Activated CD8-positive, alpha-beta T cell treated with anti-CD3 and anti-CD28 coated beads for 36 hours (primary cell): ENCODE measurements at regions of chr3 and their contacts with region 1.

Region 1: DNA sequence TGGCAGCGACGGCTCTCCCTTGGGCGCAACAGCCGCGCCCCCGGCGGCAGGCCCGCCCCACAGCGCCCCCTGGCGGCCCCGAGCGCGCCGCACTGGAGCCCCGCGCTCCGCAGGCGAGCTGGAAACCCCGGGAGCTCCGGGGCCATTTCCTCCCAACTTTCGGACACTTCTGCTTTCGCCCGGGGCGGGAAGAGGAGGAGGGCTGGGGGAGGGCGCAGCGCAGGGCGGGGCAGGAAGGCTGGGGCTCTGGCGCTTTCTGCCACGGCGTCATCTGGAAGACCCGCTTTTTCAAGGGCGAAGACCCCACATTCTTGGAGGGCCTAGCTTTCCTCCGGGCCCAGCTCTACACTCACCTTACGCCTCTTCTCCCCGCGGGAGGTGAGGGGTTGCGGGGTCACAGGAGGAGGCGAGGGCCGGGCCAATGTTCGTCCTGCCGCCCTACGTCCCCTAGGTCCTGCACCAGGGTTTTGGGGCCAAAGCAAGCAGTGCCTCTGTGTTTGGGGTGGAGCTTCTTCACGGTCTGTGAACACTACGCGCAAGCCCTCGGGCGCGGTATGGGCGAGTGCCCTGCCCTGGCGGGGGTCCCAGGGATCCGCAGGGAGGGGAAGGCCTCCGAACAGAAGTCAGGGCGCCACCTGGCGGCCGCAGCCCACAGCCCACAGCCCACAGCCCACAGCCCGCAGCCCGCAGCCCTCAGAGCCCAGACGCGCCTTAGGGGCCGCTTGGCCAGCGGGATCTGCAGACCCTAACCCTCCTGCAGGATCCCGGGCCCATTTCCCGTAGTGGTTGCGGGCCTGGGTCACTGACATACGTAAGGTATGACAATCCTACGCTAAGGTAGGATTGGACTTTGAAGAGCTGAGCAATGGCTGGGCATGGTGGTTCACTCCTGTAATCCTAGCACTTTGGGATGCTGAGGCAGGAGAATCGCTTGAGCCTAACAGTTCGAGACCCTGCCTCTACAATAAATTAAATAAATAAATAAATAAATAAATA is 31.1 kb downstream of the FOXL2 start:
- DNase-seq: peak; percentile 91
- ATAC-seq: peak; percentile 93
- H3K4me3 Mint-ChIP-seq: peak overlapping the region; percentile 80
- H3K27ac Mint-ChIP-seq: peak overlapping the region; percentile 78
- H3K4me1 Mint-ChIP-seq: peaks cover 3% of the 10 kb centered on the region
- H3K27me3 Mint-ChIP-seq: peaks cover 4% of the 10 kb centered on the region
- CTCF ChIP-seq: peak; percentile 90

Region 2: GRCh38 chr3:138608322-138609135 is 307.3 kb before region 1 on chr3 and contains the start of gene FAIM:
- CTCF ChIA-PET with region 1: interaction called, 11 read pairs
- POLR2A ChIA-PET with region 1: interaction called, 3 read pairs
- intact Hi-C with region 1: no loop called
- DNase-seq: peak; percentile 74
- ATAC-seq: peak; percentile 76
- H3K4me3 Mint-ChIP-seq: peak within 1 kb of the TSS; percentile 76
- H3K27ac Mint-ChIP-seq: peak within 1 kb of the TSS; percentile 95
- H3K4me1 Mint-ChIP-seq: peaks cover 12% of the 10 kb centered on the region
- H3K27me3 Mint-ChIP-seq: no peaks in the 10 kb centered on the region
- CTCF ChIP-seq: no peak
- total RNA-seq, gene FAIM: 6.0 TPM

Region 3: DNA sequence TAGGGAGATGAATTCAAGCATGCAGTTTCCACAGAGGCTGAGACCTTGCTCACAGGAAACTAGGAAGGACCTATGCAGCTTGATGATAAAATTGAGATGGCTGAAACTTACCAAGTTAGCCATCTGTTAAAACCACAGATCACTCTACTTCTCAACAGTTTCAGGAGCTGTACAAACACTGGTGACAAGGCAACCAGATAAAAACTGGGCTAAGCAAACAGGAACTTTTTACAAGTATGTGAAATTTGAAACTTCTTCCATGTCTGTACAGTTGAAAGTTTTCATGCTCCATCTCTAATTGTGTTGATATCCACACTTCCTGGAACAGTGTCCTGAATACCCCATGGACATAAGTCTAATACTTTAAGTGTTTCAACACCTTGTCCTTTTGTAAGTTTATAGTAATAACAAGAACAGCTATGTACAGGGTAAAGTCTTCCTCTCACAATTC is 229.0 kb before region 1 on chr3:
- CTCF ChIA-PET with region 1: interaction called, 347 read pairs
- POLR2A ChIA-PET with region 1: no interaction called
- intact Hi-C with region 1: no loop called
- DNase-seq: no peak
- ATAC-seq: peak; percentile 70
- H3K4me3 Mint-ChIP-seq: no peak overlapping the region
- H3K27ac Mint-ChIP-seq: peak overlapping the region; percentile 57
- H3K4me1 Mint-ChIP-seq: peaks cover 11% of the 10 kb centered on the region
- H3K27me3 Mint-ChIP-seq: no peaks in the 10 kb centered on the region
- CTCF ChIP-seq: no peak

Region 4: DNA sequence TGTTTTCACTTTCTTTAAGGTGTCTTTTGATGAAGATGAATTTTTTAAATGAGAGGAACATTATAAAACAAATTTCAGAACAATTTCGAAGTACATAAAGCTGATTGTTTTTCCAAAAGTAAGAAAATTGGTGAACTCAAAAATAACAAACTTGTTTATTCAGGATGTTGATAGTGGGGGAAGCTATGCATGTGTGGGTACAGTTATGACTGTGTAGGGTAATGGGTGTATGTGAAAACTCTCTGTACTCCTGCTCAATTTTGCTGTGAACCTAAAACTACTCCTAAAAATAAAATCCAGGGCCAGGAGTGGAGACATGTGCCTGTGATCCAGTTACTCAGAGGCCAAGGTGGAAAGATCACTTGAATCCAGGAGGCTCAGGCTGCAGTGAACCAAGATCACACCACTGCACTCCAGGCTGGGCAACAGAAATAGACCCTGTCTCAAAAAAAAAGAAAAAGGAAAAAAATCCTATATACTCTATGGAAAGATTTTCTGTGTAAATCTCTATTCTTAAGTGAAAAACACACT is 118.2 kb before region 1 on chr3:
- CTCF ChIA-PET with region 1: interaction called, 12 read pairs
- POLR2A ChIA-PET with region 1: no interaction called
- intact Hi-C with region 1: no loop called
- DNase-seq: no peak
- ATAC-seq: no peak
- H3K4me3 Mint-ChIP-seq: no peak overlapping the region
- H3K27ac Mint-ChIP-seq: peak overlapping the region; percentile 55
- H3K4me1 Mint-ChIP-seq: peaks cover 13% of the 10 kb centered on the region
- H3K27me3 Mint-ChIP-seq: no peaks in the 10 kb centered on the region
- CTCF ChIP-seq: no peak

Region 5: GRCh38 chr3:138890555-138891187 is 25.1 kb before region 1 on chr3:
- CTCF ChIA-PET with region 1: interaction called, 21 read pairs
- POLR2A ChIA-PET with region 1: no interaction called
- intact Hi-C with region 1: no loop called
- DNase-seq: peak; percentile 13
- ATAC-seq: no peak
- H3K4me3 Mint-ChIP-seq: no peak overlapping the region
- H3K27ac Mint-ChIP-seq: no peak overlapping the region
- H3K4me1 Mint-ChIP-seq: peaks cover 2% of the 10 kb centered on the region
- H3K27me3 Mint-ChIP-seq: peaks cover 3% of the 10 kb centered on the region
- CTCF ChIP-seq: no peak

Region 6: DNA sequence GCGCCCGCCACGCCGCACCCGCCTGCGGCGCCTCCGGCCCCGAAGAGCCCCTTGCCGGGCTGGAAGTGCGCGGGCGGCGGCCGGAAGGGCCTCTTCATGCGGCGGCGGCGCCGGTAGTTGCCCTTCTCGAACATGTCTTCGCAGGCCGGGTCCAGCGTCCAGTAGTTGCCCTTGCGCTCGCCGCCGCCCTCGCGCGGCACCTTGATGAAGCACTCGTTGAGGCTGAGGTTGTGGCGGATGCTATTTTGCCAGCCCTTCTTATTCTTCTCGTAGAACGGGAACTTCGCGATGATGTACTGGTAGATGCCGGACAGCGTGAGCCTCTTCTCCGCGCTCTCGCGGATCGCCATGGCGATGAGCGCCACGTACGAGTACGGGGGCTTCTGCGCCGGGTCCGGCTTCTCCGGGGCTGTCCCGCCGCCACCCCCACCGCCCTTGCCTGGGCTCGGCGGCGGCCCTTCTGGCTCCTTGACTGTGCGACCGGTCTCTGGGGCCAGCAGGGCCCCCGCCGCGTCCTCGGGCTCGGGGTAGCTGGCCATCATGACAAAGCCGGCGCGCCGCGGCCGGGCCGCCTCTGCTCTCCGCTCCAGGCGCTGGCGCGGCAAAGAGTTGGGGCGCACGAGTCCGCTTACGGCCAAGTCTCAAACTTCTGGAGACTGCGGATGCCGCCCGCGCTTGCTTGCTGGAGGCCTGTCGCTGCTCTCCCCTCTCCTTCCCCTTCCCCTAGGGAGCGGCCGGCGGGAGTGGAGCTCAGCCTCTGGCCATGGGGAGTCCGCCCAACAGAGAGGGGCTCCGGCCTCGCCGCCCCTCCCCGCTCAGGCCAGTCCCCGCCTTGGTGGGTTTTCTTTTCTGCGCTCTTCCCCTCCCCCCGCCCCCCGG is 30.6 kb after region 1 on chr3:
- CTCF ChIA-PET with region 1: interaction called, 12 read pairs
- POLR2A ChIA-PET with region 1: no interaction called
- intact Hi-C with region 1: no loop called
- DNase-seq: peak; percentile 51
- ATAC-seq: peak; percentile 14
- H3K4me3 Mint-ChIP-seq: peak overlapping the region; percentile 49
- H3K27ac Mint-ChIP-seq: no peak overlapping the region
- H3K4me1 Mint-ChIP-seq: peaks cover 30% of the 10 kb centered on the region
- H3K27me3 Mint-ChIP-seq: peaks cover 74% of the 10 kb centered on the region
- CTCF ChIP-seq: no peak

Region 7: DNA sequence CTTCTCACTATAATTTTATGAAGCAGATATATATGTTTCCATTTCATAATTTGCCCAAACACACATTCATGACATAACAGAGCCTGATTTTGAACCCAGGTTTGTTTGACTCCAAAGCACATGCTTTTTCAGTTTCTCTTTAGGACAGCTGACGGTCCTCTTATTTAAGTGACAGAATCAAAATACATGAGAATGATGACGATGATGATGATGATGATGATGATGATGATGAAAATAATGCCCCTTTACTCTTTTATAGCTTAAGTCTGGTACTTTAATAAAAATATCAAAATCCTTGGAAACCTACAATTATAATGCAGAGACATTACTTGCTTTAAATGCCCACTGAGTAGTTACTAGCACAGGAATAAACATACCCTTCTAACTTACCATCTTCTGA is 458.3 kb after region 1 on chr3:
- CTCF ChIA-PET with region 1: no interaction called
- POLR2A ChIA-PET with region 1: no interaction called
- intact Hi-C with region 1: no loop called
- DNase-seq: no peak
- ATAC-seq: no peak
- H3K4me3 Mint-ChIP-seq: no peak overlapping the region
- H3K27ac Mint-ChIP-seq: no peak overlapping the region
- H3K4me1 Mint-ChIP-seq: peaks cover 10% of the 10 kb centered on the region
- H3K27me3 Mint-ChIP-seq: no peaks in the 10 kb centered on the region
- CTCF ChIP-seq: no peak